Activated T-helper 2 cell treated with anti-CD3 and anti-CD28 coated beads, Interferon-gamma antibody, Interleukin-2, Interleukin-4, amounts not matched to agents 10 μg/mL and 5 μg/mL and 100 μg/mL, durations not matched to agents 14 hours and 24 hours and 36 hours (primary cell): ENCODE measurements at regions of chrX and their contacts with region 1.

Region 1: GRCh38 chrX:64894454-64895038 is 81.7 kb downstream of the ZC4H2 start:
- DNase-seq: peak; percentile 13
- H3K4me3 Mint-ChIP-seq: no peak overlapping the region
- H3K27ac Mint-ChIP-seq: no peak overlapping the region
- H3K4me1 Mint-ChIP-seq: peaks cover 1% of the 10 kb centered on the region
- H3K27me3 Mint-ChIP-seq: no peaks in the 10 kb centered on the region

Region 2: DNA sequence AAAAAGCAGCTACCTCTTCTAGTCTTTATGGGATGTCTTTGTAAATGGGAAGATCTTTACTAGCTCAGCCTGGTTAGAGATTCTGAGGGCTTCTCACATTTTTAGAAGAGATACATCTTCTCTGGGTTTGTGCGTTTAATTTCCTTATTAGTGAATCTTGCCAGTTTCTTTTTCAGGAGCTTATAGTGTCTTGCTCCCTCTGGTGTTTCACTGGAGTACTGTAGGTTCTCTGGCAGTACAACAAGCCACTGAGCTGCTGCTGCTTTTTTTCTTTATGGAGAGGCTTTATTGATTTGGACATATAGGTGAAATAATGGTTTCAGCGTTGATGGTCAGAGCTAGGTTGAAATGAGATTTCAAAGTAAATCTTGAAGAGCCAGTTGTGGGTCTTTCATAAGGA is 557.1 kb after region 1 on chrX:
- intact Hi-C with region 1: loop called (anchors 5 kb)
- DNase-seq: no peak
- H3K4me3 Mint-ChIP-seq: no peak overlapping the region
- H3K27ac Mint-ChIP-seq: no peak overlapping the region
- H3K4me1 Mint-ChIP-seq: no peaks in the 10 kb centered on the region
- H3K27me3 Mint-ChIP-seq: no peaks in the 10 kb centered on the region

Region 3: DNA sequence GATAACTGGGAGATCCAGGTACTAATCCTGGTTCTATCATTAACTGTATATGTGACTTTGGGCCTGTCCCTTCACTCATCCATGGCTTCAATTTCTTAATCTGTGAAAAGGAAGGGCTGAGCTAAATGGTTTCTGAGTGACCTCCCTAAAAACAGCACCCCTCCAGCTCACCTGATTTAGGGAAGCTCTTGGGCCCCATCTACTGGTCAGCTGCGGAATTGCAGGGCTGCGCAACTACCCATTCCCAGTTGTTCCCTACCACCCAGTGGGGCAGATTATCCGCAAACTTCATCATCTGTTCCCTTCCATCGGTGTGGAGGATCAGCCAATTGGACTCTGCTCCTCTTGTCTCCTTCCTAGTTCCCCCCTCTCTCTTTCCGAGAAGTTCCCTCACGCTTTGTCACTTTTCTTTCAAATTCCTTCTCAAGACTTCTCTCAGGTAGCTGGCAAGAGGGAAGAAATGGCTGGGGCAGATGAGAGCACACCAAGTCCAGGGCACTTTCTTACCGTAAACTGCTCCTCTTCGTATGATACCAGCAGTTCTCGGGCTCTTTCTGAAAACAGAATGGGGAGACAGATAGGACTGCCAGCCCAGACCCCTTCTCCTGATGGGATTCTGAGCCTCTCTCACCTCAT is 634.3 kb after region 1 on chrX:
- intact Hi-C with region 1: loop called (anchors 10 kb)
- DNase-seq: peak; percentile 13
- H3K4me3 Mint-ChIP-seq: no peak overlapping the region
- H3K27ac Mint-ChIP-seq: no peak overlapping the region
- H3K4me1 Mint-ChIP-seq: peaks cover 11% of the 10 kb centered on the region
- H3K27me3 Mint-ChIP-seq: no peaks in the 10 kb centered on the region

Region 4: DNA sequence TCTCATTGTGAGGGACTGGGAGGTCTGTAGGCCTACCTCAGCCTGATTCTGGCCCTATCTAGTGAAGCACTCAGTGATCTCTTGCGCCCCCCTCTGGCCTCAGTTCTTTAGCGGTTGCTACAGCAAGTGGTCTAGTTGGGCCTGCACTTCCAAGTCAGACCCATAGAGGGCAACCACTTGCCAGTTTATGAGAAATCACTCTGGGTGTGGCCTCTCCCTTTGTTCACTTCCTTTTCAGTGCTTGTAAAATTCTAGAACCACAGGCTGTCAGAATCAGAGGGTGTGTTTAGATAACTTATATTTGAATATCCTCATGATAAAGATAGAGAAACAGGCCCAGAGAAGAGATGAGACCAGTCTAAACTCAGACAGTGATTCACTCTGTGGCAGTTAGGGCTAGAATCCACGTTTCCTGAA is 700.9 kb after region 1 on chrX:
- intact Hi-C with region 1: no loop called
- DNase-seq: peak; percentile 83
- H3K4me3 Mint-ChIP-seq: peak overlapping the region; percentile 22
- H3K27ac Mint-ChIP-seq: peak overlapping the region; percentile 90
- H3K4me1 Mint-ChIP-seq: peaks cover 44% of the 10 kb centered on the region
- H3K27me3 Mint-ChIP-seq: no peaks in the 10 kb centered on the region